CD8-positive, alpha-beta T cell (primary cell): ENCODE measurements at regions of chr2 and their contacts with region 1.

Region 1: DNA sequence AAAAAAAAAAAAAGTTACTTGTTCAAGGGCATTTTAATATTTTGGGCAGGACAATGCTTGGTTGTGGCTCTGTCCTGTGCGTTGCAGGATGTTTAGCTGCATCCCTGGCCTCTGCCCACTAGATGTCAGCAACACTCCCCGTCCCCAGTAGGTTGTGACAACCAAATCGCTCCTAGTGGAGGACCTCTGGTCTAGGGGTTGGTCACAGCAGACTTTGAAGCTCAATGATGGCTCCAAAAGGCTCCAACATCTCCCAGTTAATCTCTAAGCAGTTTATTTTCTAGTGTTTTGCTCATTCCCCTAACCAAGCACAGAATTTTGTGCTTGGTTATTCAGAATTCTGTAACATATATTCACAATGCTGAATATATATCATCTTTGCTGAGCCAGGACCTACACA is 67.0 kb downstream of the CHRNA1 start:
- DNase-seq: peak; percentile 20 to 79 (median 61)
- ATAC-seq: peak; percentile 91
- H3K4me3 ChIP-seq: no peak overlapping the region
- H3K4me3 Mint-ChIP-seq: no peak overlapping the region
- H3K27ac ChIP-seq: no peak overlapping the region
- H3K27ac Mint-ChIP-seq: no peak overlapping the region
- H3K4me1 ChIP-seq: no peaks in the 10 kb centered on the region
- H3K4me1 Mint-ChIP-seq: peaks cover 7% of the 10 kb centered on the region
- H3K27me3 ChIP-seq: no peaks in the 10 kb centered on the region
- H3K27me3 Mint-ChIP-seq: no peaks in the 10 kb centered on the region
- CTCF ChIP-seq: peak; percentile 79

Region 2: DNA sequence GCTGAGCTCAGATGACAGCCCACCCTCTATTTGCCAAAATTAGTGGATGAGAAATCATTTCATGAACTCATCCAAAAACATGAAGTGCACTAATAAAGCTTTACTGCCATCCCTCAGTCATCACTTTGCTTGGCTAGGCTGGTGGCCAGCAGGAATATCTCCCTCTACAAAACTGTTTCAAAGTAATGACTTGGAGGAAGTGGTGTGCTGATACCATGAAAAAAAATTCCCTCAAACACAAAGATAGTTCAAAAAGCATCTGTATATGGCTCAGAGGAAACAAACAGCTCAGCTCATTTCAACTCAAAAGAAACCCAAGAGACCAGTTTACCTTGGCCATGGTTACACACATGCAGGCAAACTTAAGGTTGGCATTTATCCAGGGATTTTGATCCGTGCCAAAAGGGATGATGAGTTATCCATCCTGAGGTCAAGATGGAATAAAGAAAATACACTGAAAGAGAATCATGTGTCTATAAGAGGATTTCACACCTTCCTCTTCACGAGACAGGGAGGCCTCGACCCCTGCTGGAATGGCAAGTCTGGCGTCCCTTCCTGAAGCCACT is 81.3 kb before region 1 on chr2:
- CTCF ChIA-PET with region 1: interaction called, 10 read pairs
- POLR2A ChIA-PET with region 1: no interaction called
- intact Hi-C with region 1: no loop called
- DNase-seq: peak in 1 of 9 experiments; percentile 52
- ATAC-seq: peak; percentile 69
- H3K4me3 ChIP-seq: no peak overlapping the region
- H3K4me3 Mint-ChIP-seq: peak overlapping the region; percentile 12
- H3K27ac ChIP-seq: peak overlapping the region in 1 of 2 experiments; percentile 60
- H3K27ac Mint-ChIP-seq: peak overlapping the region; percentile 58
- H3K4me1 ChIP-seq: peaks cover 62% of the 10 kb centered on the region
- H3K4me1 Mint-ChIP-seq: peaks cover 83% of the 10 kb centered on the region
- H3K27me3 ChIP-seq: no peaks in the 10 kb centered on the region
- H3K27me3 Mint-ChIP-seq: no peaks in the 10 kb centered on the region
- CTCF ChIP-seq: no peak

Region 3: GRCh38 chr2:174729797-174730697 is 32.8 kb after region 1 on chr2:
- CTCF ChIA-PET with region 1: interaction called, 40 read pairs
- POLR2A ChIA-PET with region 1: no interaction called
- intact Hi-C with region 1: no loop called
- DNase-seq: peak in 8 of 9 experiments; percentile 2 to 61 (median 34)
- ATAC-seq: peak; percentile 76
- H3K4me3 ChIP-seq: peak overlapping the region; percentile 60 to 74
- H3K4me3 Mint-ChIP-seq: peak overlapping the region; percentile 88
- H3K27ac ChIP-seq: no peak overlapping the region
- H3K27ac Mint-ChIP-seq: no peak overlapping the region
- H3K4me1 ChIP-seq: peaks cover 10% of the 10 kb centered on the region
- H3K4me1 Mint-ChIP-seq: peaks cover 20% of the 10 kb centered on the region
- H3K27me3 ChIP-seq: peaks cover 0 to 7% of the 10 kb centered on the region in 2 experiments
- H3K27me3 Mint-ChIP-seq: peaks cover 8% of the 10 kb centered on the region
- CTCF ChIP-seq: no peak

Region 4: DNA sequence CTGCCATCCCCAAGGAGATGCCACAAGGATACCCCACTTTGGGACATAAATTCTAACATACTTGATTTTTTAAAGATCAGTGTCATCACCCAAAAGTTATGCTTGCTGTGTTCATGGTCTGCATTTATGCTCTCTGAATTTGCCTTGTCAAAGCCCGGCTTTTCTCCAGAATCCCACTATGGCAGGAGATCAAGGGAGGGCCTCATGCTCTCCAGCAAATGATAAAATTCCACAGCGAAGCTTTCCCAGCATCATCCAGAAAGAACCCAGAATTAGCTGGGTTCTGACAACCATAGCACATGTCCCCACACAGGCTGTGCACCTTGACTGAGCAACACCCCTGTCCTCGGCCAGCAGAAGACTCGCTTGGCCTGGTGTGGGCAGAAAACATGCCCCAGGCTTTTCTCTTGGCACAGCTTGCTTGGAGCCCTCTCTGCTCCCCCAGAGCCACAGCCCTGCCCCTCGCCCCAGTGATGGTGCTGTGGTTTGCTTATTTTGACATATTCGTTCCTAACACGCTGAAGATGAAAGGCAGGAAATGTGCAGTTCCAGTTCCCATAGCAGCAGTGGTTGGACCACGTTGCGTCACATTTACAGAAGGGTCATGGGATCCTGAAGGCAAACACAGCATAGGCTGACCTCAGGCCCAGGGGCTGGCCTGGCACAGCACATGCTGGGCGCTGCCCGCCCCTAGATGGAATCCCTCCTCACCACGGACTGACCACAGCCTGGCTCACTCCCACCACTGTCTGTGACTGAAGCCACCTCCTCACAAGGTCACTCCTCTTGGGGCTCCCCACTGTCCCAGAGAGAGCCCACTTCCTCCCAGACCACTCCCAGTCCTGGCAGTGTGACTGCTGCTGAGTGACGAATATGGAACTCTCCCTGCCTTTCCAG is 81.1 kb after region 1 on chr2:
- CTCF ChIA-PET with region 1: interaction called, 33 read pairs
- POLR2A ChIA-PET with region 1: no interaction called
- intact Hi-C with region 1: no loop called
- DNase-seq: peak; percentile 61 to 94 (median 81)
- ATAC-seq: peak; percentile 84
- H3K4me3 ChIP-seq: peak overlapping the region in 1 of 2 experiments; percentile 16
- H3K4me3 Mint-ChIP-seq: peak overlapping the region; percentile 57
- H3K27ac ChIP-seq: peak overlapping the region; percentile 57 to 62
- H3K27ac Mint-ChIP-seq: peak overlapping the region; percentile 93
- H3K4me1 ChIP-seq: peaks cover 52% of the 10 kb centered on the region
- H3K4me1 Mint-ChIP-seq: peaks cover 51% of the 10 kb centered on the region
- H3K27me3 ChIP-seq: no peaks in the 10 kb centered on the region
- H3K27me3 Mint-ChIP-seq: no peaks in the 10 kb centered on the region
- CTCF ChIP-seq: no peak

Region 5: GRCh38 chr2:175111200-175111657 is 414.0 kb after region 1 on chr2:
- CTCF ChIA-PET with region 1: interaction called, 4 read pairs
- POLR2A ChIA-PET with region 1: no interaction called
- intact Hi-C with region 1: loop called in 1 of 2 experiments (anchors 5 kb)
- DNase-seq: peak in 2 of 9 experiments; percentile 53 to 67
- ATAC-seq: peak; percentile 72
- H3K4me3 ChIP-seq: no peak overlapping the region
- H3K4me3 Mint-ChIP-seq: no peak overlapping the region
- H3K27ac ChIP-seq: no peak overlapping the region
- H3K27ac Mint-ChIP-seq: peak overlapping the region; percentile 33
- H3K4me1 ChIP-seq: no peaks in the 10 kb centered on the region
- H3K4me1 Mint-ChIP-seq: no peaks in the 10 kb centered on the region
- H3K27me3 ChIP-seq: no peaks in the 10 kb centered on the region
- H3K27me3 Mint-ChIP-seq: no peaks in the 10 kb centered on the region
- CTCF ChIP-seq: peak; percentile 97

Region 6: DNA sequence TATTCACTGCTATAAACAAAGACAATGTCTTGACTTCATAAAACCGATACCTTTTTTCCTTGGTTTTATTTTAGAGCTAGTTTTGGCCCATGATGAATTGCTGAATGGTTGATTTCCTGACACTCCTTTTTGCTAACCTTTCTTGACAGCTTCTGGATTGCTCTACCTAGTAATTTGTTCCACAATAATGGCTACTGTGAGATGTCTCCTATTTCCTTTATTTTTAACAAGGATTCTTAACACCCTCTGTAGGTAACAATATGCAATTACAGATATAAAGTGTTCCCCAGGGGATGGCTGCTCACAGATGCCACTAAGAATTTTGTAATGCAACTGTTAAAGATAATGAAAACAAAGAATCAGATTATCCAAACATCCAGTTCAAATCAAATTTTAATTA is 585.0 kb after region 1 on chr2:
- CTCF ChIA-PET with region 1: interaction called, 4 read pairs
- POLR2A ChIA-PET with region 1: no interaction called
- intact Hi-C with region 1: loop called (anchors 2 to 5 kb)
- DNase-seq: peak in 2 of 9 experiments; percentile 23 to 38
- ATAC-seq: peak; percentile 48
- H3K4me3 ChIP-seq: no peak overlapping the region
- H3K4me3 Mint-ChIP-seq: no peak overlapping the region
- H3K27ac ChIP-seq: no peak overlapping the region
- H3K27ac Mint-ChIP-seq: no peak overlapping the region
- H3K4me1 ChIP-seq: no peaks in the 10 kb centered on the region
- H3K4me1 Mint-ChIP-seq: no peaks in the 10 kb centered on the region
- H3K27me3 ChIP-seq: no peaks in the 10 kb centered on the region
- H3K27me3 Mint-ChIP-seq: no peaks in the 10 kb centered on the region
- CTCF ChIP-seq: peak; percentile 35